ENCODE measurements at regions of chr1 and their contacts with region 1.

Region 1: DNA sequence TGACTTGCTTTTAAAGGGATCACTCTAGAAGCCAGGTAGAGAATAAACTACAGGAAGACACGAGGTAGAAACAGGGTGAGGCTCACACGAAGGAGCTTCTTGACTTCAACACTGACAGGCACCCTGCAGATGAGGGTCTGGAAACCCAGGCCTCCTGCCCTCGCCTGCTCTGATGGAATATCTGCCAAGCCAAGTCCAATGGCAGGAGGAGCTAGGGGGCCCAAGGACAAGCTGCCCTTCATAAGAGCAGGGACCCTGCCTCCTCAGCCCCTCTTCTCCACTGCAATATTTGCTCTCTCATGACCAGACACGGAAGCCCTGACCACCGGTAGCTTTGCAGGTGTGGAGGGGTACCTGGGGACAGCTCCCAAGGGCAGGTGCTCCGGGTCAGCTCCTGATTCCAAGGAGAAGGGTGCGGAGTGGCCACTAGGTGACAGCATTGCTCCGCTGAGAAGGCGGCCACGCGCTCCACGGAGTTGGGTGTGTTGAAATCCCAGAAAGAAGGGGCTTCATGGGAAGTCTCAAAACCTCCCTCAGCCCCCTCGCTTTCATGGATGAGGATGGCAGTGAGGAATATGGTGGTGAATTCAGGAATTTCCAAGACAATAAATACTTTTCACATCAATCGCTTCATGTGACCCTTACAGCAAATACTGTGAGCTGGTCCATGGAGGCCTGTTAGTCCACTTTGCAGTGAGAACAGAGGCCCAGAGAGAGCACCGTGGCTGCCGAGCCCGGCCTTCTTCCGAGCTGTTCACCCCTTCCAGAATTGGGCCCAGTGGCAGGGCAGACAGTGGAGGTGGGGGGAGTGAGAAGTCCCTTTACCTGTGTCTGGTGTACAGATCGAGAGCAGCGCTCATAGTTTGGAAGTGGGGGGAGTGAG is 33.2 kb upstream of the PAX7 start:
- DNase-seq: peak; percentile 33 to 41
- ATAC-seq: peak; percentile 95 to 96
- H3K4me3 ChIP-seq: no peak overlapping the region
- H3K27ac ChIP-seq: 0 out of 6 replicates have a peak overlapping the region, but pooled peaks of 1 of the 2 experiments have one; percentile 8
- H3K4me1 ChIP-seq: 0 out of 3 replicates have a peak, but pooled peaks cover 3% of the 10 kb centered on the region
- CTCF ChIP-seq: peak; percentile 87
- EP300 ChIP-seq: no peak
- POLR2A ChIP-seq: no peak
- RAD21 ChIP-seq: peak; percentile 96 to 98

Region 2: GRCh38 chr1:18352636-18353265 is 244.7 kb before region 1 on chr1:
- CTCF ChIA-PET with region 1: no interaction called
- POLR2A ChIA-PET with region 1: no interaction called
- DNase-seq: no peak
- ATAC-seq: no peak
- H3K4me3 ChIP-seq: no peak overlapping the region
- H3K27ac ChIP-seq: no peak overlapping the region
- H3K4me1 ChIP-seq: no peaks in the 10 kb centered on the region
- CTCF ChIP-seq: no peak
- EP300 ChIP-seq: no peak
- POLR2A ChIP-seq: no peak
- RAD21 ChIP-seq: no peak

Region 3: GRCh38 chr1:18661404-18662284 is 64.2 kb after region 1 on chr1:
- CTCF ChIA-PET with region 1: interaction called, 10 read pairs
- POLR2A ChIA-PET with region 1: no interaction called
- DNase-seq: no peak
- ATAC-seq: 0 out of 6 replicates have a peak, but pooled peaks of 1 of the 2 experiments have one; percentile 15
- H3K4me3 ChIP-seq: no peak overlapping the region
- H3K27ac ChIP-seq: peak overlapping the region in 1 of 2 experiments; percentile 21; a peak in 2 of 6 replicates
- H3K4me1 ChIP-seq: peaks cover 12% of the 10 kb centered on the region
- CTCF ChIP-seq: no peak
- EP300 ChIP-seq: no peak
- POLR2A ChIP-seq: no peak
- RAD21 ChIP-seq: no peak

Region 4: DNA sequence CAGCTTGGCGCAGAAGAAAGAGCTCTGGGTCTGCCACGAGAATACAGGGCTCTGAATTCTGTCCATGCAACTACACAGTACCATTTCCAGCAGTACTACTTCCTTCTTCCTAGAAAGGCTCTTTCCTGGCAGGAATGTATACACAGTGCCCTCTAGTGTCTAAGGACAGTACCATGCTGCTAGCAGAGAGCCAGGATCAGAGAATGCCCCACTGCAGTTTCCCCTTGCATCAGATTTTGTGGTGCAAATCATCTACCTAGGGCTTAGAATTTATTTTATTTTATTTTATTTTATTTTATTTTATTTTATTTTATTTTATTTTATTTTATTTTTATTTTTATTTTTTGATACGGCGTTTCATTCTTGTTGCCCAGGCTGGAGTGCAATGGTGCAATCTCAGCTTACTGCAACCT is 84.0 kb after region 1 on chr1:
- CTCF ChIA-PET with region 1: interaction called, 112 read pairs
- POLR2A ChIA-PET with region 1: no interaction called
- DNase-seq: peak; percentile 66 to 73
- ATAC-seq: peak; percentile 85 to 92; a peak in 5 of 6 replicates
- H3K4me3 ChIP-seq: no peak overlapping the region
- H3K27ac ChIP-seq: peak overlapping the region; percentile 57 to 75; a peak in 4 of 6 replicates
- H3K4me1 ChIP-seq: peaks cover 8% of the 10 kb centered on the region
- CTCF ChIP-seq: peak; percentile 72
- EP300 ChIP-seq: no peak
- POLR2A ChIP-seq: no peak
- RAD21 ChIP-seq: peak; percentile 82 to 86

Region 5: DNA sequence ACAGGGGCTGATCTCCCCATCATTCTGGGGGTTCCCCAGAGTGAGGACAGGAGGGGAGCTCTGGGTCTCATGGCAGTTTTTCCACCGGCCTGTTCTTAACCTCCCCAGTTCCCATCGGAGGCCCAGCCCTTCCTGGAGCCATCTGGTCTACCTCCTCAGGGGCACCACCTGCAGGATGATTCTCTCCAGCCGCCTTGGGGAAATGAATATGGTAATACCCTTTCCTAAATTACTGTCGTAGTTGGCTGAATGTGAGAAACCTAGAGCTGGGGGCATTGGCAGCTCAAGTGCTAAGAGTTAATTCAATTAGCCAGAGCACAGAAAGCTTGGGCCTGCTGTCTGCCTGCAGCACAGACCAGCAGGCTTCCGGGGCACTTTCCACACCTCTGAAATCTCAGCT is 197.2 kb after region 1 on chr1:
- CTCF ChIA-PET with region 1: interaction called, 18 read pairs
- POLR2A ChIA-PET with region 1: no interaction called
- DNase-seq: peak in 1 of 2 experiments; percentile 22
- ATAC-seq: peak in 1 of 2 experiments; percentile 59; a peak in 3 of 6 replicates
- H3K4me3 ChIP-seq: no peak overlapping the region
- H3K27ac ChIP-seq: no peak overlapping the region
- H3K4me1 ChIP-seq: no peaks in the 10 kb centered on the region
- CTCF ChIP-seq: no peak
- EP300 ChIP-seq: no peak
- POLR2A ChIP-seq: no peak
- RAD21 ChIP-seq: no peak

Region 6: GRCh38 chr1:18875107-18875795 is 277.9 kb after region 1 on chr1:
- CTCF ChIA-PET with region 1: interaction called, 73 read pairs
- POLR2A ChIA-PET with region 1: no interaction called
- DNase-seq: peak; percentile 81 to 87
- ATAC-seq: peak; percentile 87 to 97
- H3K4me3 ChIP-seq: no peak overlapping the region
- H3K27ac ChIP-seq: no peak overlapping the region
- H3K4me1 ChIP-seq: no peaks in the 10 kb centered on the region
- CTCF ChIP-seq: peak; percentile 65
- EP300 ChIP-seq: no peak
- POLR2A ChIP-seq: no peak
- RAD21 ChIP-seq: peak; percentile 75

Region 7: GRCh38 chr1:18913065-18913835 is 315.8 kb after region 1 on chr1:
- CTCF ChIA-PET with region 1: interaction called, 11 read pairs
- POLR2A ChIA-PET with region 1: no interaction called
- DNase-seq: peak; percentile 74 to 92
- ATAC-seq: peak; percentile 83 to 91
- H3K4me3 ChIP-seq: no peak overlapping the region
- H3K27ac ChIP-seq: peak overlapping the region; percentile 46 to 79; a peak in 4 of 6 replicates
- H3K4me1 ChIP-seq: peaks cover 24% of the 10 kb centered on the region
- CTCF ChIP-seq: peak; percentile 95
- EP300 ChIP-seq: no peak
- POLR2A ChIP-seq: no peak
- RAD21 ChIP-seq: peak; percentile 80 to 89